PC-3 (cell line): ENCODE measurements at regions of chr3 and their contacts with region 1.

Region 1: GRCh38 chr3:196502775-196503195 is 783 bp downstream of the RNF168 start:
- DNase-seq: peak; percentile 94
- ATAC-seq: peak; percentile 50
- H3K4me3 ChIP-seq: peak overlapping the region; percentile 82
- H3K27ac ChIP-seq: peak overlapping the region; percentile 80
- H3K4me1 ChIP-seq: peaks cover 19% of the 10 kb centered on the region
- H3K27me3 ChIP-seq: no peaks in the 10 kb centered on the region
- CTCF ChIP-seq: no peak

Region 2: GRCh38 chr3:196432137-196432879 is 70.5 kb before region 1 on chr3 and contains the start of gene UBXN7:
- CTCF ChIA-PET with region 1: no interaction called
- POLR2A ChIA-PET with region 1: no interaction called
- intact Hi-C with region 1: loop called (anchors 5 kb)
- DNase-seq: peak; percentile 94
- ATAC-seq: peak; percentile 93
- H3K4me3 ChIP-seq: peak within 1 kb of the TSS; percentile 94
- H3K27ac ChIP-seq: peak within 1 kb of the TSS; percentile 7
- H3K4me1 ChIP-seq: peaks cover 11% of the 10 kb centered on the region; the same call in 1 of the 2 replicates
- H3K27me3 ChIP-seq: no peaks in the 10 kb centered on the region
- CTCF ChIP-seq: no peak
- total RNA-seq, gene UBXN7: 10.2 and 10.5 TPM in 2 replicates

Region 3: GRCh38 chr3:196454935-196455334 is 47.9 kb before region 1 on chr3:
- CTCF ChIA-PET with region 1: no interaction called
- POLR2A ChIA-PET with region 1: no interaction called
- intact Hi-C with region 1: no loop called
- DNase-seq: no peak
- ATAC-seq: no peak
- H3K4me3 ChIP-seq: no peak overlapping the region
- H3K27ac ChIP-seq: no peak overlapping the region
- H3K4me1 ChIP-seq: no peaks in the 10 kb centered on the region
- H3K27me3 ChIP-seq: no peaks in the 10 kb centered on the region
- CTCF ChIP-seq: no peak

Region 4: GRCh38 chr3:196547067-196547466 is 44.3 kb after region 1 on chr3:
- CTCF ChIA-PET with region 1: no interaction called
- POLR2A ChIA-PET with region 1: no interaction called
- intact Hi-C with region 1: no loop called
- DNase-seq: no peak
- ATAC-seq: no peak
- H3K4me3 ChIP-seq: no peak overlapping the region
- H3K27ac ChIP-seq: no peak overlapping the region
- H3K4me1 ChIP-seq: no peaks in the 10 kb centered on the region
- H3K27me3 ChIP-seq: no peaks in the 10 kb centered on the region
- CTCF ChIP-seq: no peak